Activated B cell treated with CpG ODN at 0.5 μM for 24 hours (primary cell): ENCODE measurements at regions of chr16 and their contacts with region 1.

Region 1: DNA sequence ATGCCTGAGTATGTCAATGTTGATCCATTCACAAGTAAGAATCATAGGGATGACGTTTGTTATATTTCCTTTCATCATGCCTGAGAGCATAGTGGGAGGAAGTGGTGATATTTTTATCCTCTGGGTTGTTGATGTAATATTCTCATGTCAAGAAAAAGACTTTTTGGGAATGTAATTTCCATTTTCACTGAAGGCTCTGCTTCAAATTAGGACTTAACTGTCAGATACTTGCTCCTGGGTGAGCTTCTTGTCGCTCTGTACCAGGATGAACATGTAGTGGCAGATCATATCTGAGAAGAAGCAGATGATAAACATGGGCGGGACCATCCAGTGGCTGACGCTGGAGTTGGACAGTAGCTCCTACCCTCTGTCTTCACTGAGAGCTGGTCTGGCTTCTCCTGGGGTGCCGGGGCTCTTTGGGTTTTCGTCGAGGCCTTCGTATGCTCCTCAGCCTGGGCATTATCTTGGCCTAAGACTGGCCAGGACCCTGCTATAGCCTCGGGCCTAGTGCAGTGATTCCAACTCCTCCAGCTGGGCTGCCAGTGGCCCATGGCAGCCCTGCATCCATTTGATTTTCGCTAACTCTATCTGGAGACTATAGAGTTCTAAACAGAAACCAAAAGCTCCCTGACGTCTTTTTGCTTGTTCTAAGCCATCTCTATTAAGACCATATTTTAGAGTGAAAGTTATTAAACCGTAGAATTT is 19.7 kb downstream of the CYB5B start:
- DNase-seq: no peak
- ATAC-seq: peak; percentile 56
- H3K4me3 Mint-ChIP-seq: peak overlapping the region; percentile 72
- H3K27ac Mint-ChIP-seq: peak overlapping the region; percentile 82
- H3K4me1 Mint-ChIP-seq: peaks cover 40% of the 10 kb centered on the region
- H3K27me3 Mint-ChIP-seq: no peaks in the 10 kb centered on the region
- CTCF ChIP-seq: no peak

Region 2: GRCh38 chr16:69417520-69418199 is 26.4 kb before region 1 on chr16:
- CTCF ChIA-PET with region 1: no interaction called
- POLR2A ChIA-PET with region 1: no interaction called
- intact Hi-C with region 1: no loop called
- DNase-seq: no peak
- ATAC-seq: no peak
- H3K4me3 Mint-ChIP-seq: no peak overlapping the region
- H3K27ac Mint-ChIP-seq: no peak overlapping the region
- H3K4me1 Mint-ChIP-seq: no peaks in the 10 kb centered on the region
- H3K27me3 Mint-ChIP-seq: no peaks in the 10 kb centered on the region
- CTCF ChIP-seq: no peak

Region 3: DNA sequence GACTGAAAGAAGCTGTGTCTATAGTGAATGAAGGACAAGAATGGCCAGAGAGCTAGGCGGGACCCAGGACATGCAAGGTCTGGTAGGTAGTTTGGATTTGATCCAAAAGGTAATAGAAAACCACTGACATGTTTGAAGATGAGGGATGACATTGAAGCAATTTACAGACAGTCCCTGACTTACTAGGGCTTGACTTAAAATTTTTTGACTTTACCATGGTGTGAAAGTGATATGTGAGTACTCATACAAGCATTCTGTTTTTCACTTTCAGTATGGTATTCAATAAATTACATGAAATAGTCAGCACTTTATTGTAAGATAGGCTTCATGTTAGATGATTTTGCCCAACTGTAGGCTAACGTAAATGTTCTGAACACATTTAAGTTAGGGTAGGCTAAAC is 12.0 kb before region 1 on chr16:
- CTCF ChIA-PET with region 1: no interaction called
- POLR2A ChIA-PET with region 1: no interaction called
- intact Hi-C with region 1: no loop called
- DNase-seq: no peak
- ATAC-seq: no peak
- H3K4me3 Mint-ChIP-seq: no peak overlapping the region
- H3K27ac Mint-ChIP-seq: no peak overlapping the region
- H3K4me1 Mint-ChIP-seq: peaks cover 40% of the 10 kb centered on the region
- H3K27me3 Mint-ChIP-seq: no peaks in the 10 kb centered on the region
- CTCF ChIP-seq: no peak

Region 4: GRCh38 chr16:69579783-69580481 is 135.9 kb after region 1 on chr16:
- CTCF ChIA-PET with region 1: no interaction called
- POLR2A ChIA-PET with region 1: interaction called, 13 read pairs
- intact Hi-C with region 1: no loop called
- DNase-seq: no peak
- ATAC-seq: no peak
- H3K4me3 Mint-ChIP-seq: no peak overlapping the region
- H3K27ac Mint-ChIP-seq: no peak overlapping the region
- H3K4me1 Mint-ChIP-seq: peaks cover 27% of the 10 kb centered on the region
- H3K27me3 Mint-ChIP-seq: no peaks in the 10 kb centered on the region
- CTCF ChIP-seq: no peak